Breast epithelium (tissue), 4 donors: ENCODE measurements at regions of chr3 and their contacts with region 1.

Region 1: GRCh38 chr3:11601446-11602238 is 42.1 kb downstream of the VGLL4 start:
- DNase-seq: peak in 1 of 2 donors; percentile 48
- H3K4me3 ChIP-seq: peak overlapping the region in 1 of 3 donors; percentile 34
- H3K27ac ChIP-seq: peak overlapping the region; percentile 89 to 91
- H3K4me1 ChIP-seq: peaks cover 7 to 10% of the 10 kb centered on the region in 2 donors
- H3K27me3 ChIP-seq: no peaks in the 10 kb centered on the region
- CTCF ChIP-seq: no peak
- POLR2A ChIP-seq: no peak

Region 2: GRCh38 chr3:10917176-10917575 is 684.5 kb before region 1 on chr3:
- intact Hi-C with region 1: no loop called
- DNase-seq: no peak
- H3K4me3 ChIP-seq: no peak overlapping the region
- H3K27ac ChIP-seq: no peak overlapping the region
- H3K4me1 ChIP-seq: no peaks in the 10 kb centered on the region
- H3K27me3 ChIP-seq: no peaks in the 10 kb centered on the region
- CTCF ChIP-seq: no peak
- POLR2A ChIP-seq: no peak

Region 3: GRCh38 chr3:11306817-11307589 is 294.6 kb before region 1 on chr3:
- intact Hi-C with region 1: loop called (anchors 5 kb)
- DNase-seq: no peak
- H3K4me3 ChIP-seq: no peak overlapping the region
- H3K27ac ChIP-seq: peak overlapping the region; percentile 52 to 93
- H3K4me1 ChIP-seq: no peaks in the 10 kb centered on the region
- H3K27me3 ChIP-seq: no peaks in the 10 kb centered on the region
- CTCF ChIP-seq: no peak
- POLR2A ChIP-seq: no peak

Region 4: DNA sequence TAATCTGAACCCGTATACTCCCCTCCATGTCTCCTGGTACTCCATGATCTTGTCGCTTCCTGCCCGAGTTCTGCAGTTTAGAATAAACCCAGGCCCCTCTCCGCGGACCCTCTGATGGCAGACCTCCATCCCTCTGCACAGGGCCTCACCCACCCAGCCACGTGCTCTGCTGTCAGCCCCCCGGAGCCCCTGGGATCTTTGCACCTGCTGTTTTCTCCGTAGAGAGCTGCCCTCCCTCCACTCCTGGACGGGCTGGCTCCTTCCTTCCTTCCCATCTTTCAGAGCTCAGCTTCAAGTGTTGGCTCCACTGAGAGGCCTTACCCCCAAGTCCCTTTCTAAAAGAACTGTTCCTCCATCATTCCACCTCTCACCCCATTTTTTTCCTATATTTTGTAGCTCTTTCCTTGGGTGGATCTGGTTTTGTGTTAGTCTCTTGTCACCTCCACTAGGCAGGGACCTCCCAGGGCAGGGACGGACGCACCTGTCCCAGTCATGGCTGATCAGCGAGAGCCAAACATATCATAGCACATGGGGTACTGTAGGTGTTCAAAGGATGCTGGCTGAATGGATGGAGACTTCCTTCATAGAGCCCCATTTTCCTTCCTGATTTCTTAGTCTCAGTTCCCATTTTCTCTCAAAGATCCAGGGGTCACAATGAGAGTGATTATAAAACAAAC is 64.6 kb before region 1 on chr3:
- intact Hi-C with region 1: loop called (anchors 1 kb)
- DNase-seq: no peak
- H3K4me3 ChIP-seq: no peak overlapping the region
- H3K27ac ChIP-seq: no peak overlapping the region
- H3K4me1 ChIP-seq: peaks cover 6 to 11% of the 10 kb centered on the region in 2 donors
- H3K27me3 ChIP-seq: no peaks in the 10 kb centered on the region
- CTCF ChIP-seq: no peak
- POLR2A ChIP-seq: no peak